ENCODE measurements at regions of chr14 and their contacts with region 1.

Region 1: DNA sequence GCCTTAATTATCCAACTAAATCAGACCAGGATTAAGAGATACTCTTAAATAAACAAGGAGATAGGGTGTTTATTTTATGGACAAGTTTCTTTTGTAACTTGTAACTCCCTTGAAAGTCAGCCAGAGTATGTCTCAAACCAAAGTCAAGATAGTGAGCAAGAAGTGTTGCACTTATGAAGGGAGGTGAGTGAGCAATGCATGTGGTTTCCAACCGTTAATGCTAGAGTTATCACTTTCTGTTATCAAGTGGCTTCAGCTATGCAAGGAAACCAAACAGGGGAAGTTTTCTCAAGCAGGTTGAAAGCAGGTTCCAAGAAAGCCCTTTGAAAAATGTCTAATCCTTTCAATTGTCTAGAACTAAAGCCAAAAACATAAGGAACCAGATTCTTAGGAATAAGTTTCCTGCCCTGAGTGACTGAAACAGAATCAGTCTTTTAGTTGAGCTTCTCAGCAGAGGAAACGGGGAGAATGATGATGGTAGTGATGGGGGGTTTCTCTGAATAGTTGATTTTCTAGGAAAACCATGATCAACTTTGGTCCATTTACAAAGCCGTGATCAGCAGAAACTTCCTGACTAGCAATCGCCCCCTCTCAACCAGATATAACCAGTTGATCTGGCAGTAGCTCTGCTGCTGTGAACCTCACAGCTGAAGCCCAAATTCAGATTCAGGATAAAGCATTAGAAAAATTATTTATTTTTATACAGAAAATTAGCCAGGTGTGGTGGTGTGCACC is 128.4 kb downstream of the DAD1 start:
- DNase-seq: no peak
- H3K4me3 ChIP-seq: no peak overlapping the region
- H3K27ac ChIP-seq: no peak overlapping the region
- H3K27me3 ChIP-seq: no peaks in the 10 kb centered on the region
- CTCF ChIP-seq: no peak

Region 2: DNA sequence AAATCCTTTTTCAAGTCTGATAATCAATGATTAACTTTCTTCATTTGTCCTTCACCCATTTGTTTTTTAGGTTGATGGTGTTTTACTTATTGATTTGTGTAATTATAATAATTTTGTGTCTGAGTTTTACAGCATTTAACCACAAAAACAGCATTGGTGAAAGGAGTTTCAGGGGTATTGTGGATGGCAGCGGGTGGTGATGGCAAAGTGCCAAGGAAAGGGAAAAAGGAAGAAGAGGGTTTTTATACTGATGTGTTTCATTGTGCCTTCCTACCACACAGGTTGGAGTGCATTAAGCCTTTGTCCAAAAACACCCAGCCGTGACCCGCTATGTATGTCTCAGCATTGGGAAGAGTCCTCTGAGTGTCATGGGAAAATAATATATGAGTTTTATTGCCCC is 21.9 kb before region 1 on chr14:
- intact Hi-C with region 1: loop called in 1 of 2 experiments (anchors 2 kb)
- DNase-seq: no peak
- H3K4me3 ChIP-seq: no peak overlapping the region
- H3K27ac ChIP-seq: no peak overlapping the region
- H3K27me3 ChIP-seq: no peaks in the 10 kb centered on the region
- CTCF ChIP-seq: no peak

Region 3: DNA sequence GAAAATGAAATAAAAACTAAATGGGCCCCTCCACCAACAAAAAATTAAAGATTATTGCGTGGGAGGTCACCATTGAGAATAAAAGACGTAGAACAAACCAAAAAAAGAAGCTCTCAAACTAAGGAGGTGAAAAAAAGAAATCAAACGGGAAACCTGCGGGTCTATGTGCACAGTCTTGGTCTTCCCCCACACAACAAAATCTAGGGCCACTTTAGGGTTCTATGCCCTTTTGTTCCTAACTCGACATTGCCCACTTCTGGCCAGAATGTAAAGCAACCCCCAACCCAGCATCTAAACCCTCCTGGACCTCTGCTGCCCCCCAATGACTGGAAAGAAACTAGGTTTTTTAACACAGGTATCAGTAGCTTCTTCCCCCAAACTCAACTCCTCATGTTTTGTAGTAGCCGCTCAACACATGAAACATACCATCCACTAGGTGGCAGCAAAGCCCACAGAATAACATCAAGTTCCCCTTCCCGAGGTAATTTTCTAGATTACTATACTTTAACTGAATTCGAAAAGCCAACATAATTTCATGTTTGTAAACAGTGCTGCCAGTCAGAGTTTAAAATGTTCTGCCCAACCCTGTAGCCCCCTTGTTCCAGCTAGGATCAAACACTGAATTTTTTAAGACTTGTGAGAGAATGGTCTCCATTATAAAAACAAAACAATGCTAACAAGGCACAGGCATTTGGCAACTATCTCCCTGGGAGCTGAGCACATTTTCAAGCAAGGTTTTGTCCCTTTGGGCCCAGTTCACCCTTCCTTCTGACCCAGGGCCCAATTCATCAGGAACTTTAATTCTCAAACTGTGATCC is 109.7 kb after region 1 on chr14:
- intact Hi-C with region 1: no loop called
- DNase-seq: peak in 5 of 10 donors; percentile 50 to 80 (median 74)
- H3K4me3 ChIP-seq: peak overlapping the region in 3 of 59 donors; percentile 6 to 19 (median 9)
- H3K27ac ChIP-seq: peak overlapping the region in 52 of 59 donors; percentile 2 to 80 (median 66)
- H3K27me3 ChIP-seq: no peaks in the 10 kb centered on the region
- CTCF ChIP-seq: peak; percentile 65 to 96 (median 88)

Region 4: DNA sequence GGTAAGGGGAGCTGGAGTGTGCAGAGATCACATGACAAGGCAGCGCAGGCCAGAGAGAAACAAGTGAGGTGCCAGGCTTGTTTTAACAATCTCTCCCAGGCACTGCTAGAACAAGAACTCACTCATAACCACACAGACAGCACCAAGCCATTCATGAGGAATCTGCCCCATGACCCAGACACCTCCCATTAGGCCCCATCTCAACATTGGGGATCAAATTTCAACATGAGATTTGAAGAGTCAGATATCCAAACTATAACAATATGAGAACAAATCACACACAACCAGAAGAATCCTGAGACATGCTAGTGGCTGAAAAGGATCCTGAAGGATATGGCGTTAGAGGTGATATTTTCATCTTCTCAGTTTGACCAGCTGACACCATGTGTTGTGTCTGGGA is 161.6 kb after region 1 on chr14:
- intact Hi-C with region 1: no loop called
- DNase-seq: no peak
- H3K4me3 ChIP-seq: no peak overlapping the region
- H3K27ac ChIP-seq: no peak overlapping the region
- H3K27me3 ChIP-seq: no peaks in the 10 kb centered on the region
- CTCF ChIP-seq: no peak

Region 5: DNA sequence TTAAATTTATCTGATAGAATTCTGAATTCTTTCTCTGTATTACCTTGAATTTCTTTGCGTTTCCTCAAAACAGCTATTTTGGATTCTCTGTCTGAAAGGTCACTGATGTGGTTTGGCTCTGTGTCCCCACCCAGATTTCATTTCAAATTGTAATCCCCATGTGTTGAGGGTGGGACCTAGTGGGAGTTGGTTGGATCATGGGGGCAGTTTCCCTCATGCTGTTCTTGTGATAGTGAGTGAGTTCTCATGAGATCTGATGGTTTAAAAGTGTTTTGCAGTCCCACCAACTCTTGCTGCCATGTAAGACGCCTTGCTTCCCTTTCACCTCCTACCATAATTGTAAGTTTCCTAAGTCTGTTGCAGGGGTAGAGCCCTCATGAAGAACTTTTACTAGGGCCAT is 217.6 kb after region 1 on chr14:
- intact Hi-C with region 1: no loop called
- DNase-seq: no peak
- H3K4me3 ChIP-seq: no peak overlapping the region
- H3K27ac ChIP-seq: no peak overlapping the region
- H3K27me3 ChIP-seq: peaks cover 0 to 20% (median 4%) of the 10 kb centered on the region in 45 donors
- CTCF ChIP-seq: no peak

Measured in dorsolateral prefrontal cortex (tissue), 120 donors.